Head of caudate nucleus (tissue), 42 donors: ENCODE measurements at regions of chr6 and their contacts with region 1.

Region 1: GRCh38 chr6:136249811-136250685 is at the start of gene MTFR2:
- DNase-seq: peak; percentile 86 to 98 (median 95)

Region 2: DNA sequence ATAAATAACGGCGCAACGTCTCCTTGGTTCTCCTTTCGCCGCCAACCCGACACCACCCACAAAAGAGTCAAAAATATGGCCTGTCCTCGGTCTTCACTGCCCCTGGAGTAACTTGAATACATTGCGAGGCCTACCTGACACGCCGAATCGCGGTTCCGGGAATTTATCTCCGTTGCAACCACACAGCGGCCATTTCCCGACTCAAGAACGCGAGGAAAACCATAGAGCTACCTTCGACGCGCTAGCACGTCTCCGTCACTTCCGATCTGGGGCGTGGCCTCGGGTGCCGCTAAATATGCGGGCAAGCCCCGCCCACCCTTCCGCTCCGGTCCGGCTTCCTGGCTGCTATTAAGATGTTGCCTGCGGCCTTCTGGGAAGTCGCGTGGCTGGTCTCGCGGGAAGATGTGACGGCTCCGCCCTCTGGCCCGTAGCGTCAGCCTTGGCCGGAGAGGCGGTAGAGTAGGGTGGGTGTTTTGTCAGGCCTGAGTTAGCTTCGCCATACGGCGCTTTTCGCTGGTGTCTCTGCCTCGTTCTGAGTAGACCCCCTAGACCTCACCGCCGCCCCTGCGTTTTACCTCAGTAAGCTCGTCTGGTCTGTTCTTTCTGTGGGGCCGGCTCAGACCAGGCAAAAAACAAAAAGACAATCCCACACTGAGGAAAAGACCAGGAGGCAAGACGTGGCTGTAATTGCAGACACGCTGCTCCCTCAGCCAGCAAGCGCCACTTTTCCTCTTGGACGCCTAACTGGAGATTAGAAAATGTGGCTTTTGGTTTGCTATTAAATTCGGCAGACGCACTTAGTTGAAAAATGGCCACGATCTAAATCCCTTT is 39.7 kb after region 1 on chr6 and contains the start of gene BCLAF1:
- intact Hi-C with region 1: loop called (anchors 5 kb)
- DNase-seq: peak; percentile 99 to 100 (median 100)